Endothelial cell of umbilical vein (primary cell): ENCODE measurements at regions of chr5 and their contacts with region 1.

Region 1: DNA sequence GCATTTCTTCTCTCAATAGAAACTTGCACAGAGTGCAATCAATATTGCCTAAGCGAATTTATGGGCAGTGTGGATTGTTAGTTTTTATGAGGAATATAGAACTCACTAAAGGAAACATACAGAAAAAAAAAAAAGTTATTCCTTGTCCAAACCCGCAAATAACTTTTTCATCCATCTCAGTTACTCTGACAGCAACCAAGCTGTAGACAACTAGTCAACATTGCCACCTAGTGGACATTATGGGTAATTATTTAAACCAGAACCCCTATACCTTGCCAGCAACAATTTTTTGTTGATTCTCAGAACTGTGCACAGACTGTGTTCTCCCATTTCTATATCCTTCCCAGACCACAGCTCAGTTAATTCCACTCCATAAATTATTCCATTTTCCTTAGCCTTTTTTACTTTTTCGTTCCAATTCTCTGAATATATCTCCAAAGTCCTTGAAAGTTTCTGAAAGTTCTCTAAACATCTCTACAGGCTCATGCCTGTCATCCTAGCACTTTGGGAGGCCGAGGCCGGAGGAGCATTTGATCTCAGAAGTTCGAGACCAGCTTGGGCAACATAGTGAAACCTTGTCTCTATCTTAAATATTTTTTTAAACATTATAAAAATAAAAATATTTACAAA is 2.6 kb upstream of the AFAP1L1 start:
- DNase-seq: peak; percentile 47
- H3K4me3 ChIP-seq: no peak overlapping the region
- H3K27ac ChIP-seq: no peak overlapping the region
- H3K4me1 ChIP-seq: peaks cover 14% of the 10 kb centered on the region
- H3K27me3 ChIP-seq: peaks cover 0 to 1% of the 10 kb centered on the region in 2 experiments
- CTCF ChIP-seq: peak; percentile 49 to 57
- POLR2A ChIP-seq: no peak

Region 2: DNA sequence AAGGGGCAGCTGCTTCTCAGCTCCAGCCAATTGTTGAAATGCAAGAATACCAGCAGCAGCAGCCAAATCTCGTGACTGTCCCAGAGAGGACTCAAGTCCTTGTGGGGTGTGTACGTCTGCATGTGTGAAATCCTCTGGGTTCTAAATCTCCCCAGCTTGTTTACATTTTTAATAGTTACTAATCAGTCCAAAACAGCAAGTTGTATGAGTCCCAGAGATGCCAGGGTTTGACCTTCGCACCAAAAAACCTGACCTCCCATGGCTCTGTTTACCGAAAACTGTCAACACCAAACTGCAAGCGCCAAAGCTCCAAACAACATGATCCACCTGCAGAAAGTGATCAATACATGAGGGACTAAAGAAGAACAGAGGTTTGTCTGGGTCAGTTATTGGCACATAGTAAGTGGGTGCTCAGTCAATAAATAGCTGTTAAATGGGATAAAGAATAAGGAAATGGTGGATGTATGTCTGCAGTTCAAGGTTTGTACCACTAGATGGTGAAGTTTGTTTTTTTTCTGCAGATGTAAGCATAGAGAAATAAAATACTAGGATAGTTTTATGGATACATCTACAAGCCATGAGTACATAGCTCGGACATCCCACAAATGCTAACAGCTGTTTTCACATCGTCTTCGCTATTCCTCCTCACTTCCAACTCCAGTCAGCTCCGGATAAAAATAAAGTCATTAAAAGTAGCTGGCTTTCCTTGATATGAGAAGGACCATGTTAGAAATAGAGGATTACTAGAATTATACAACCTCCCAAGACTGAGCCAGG is 527.9 kb before region 1 on chr5:
- CTCF ChIA-PET with region 1: interaction called, 10 read pairs
- POLR2A ChIA-PET with region 1: no interaction called
- dilution Hi-C with region 1: no loop called
- intact Hi-C with region 1: no loop called
- DNase-seq: peak; percentile 82
- H3K4me3 ChIP-seq: no peak overlapping the region
- H3K27ac ChIP-seq: no peak overlapping the region
- H3K4me1 ChIP-seq: no peaks in the 10 kb centered on the region
- H3K27me3 ChIP-seq: no peaks in the 10 kb centered on the region
- CTCF ChIP-seq: peak; percentile 49
- POLR2A ChIP-seq: no peak

Region 3: DNA sequence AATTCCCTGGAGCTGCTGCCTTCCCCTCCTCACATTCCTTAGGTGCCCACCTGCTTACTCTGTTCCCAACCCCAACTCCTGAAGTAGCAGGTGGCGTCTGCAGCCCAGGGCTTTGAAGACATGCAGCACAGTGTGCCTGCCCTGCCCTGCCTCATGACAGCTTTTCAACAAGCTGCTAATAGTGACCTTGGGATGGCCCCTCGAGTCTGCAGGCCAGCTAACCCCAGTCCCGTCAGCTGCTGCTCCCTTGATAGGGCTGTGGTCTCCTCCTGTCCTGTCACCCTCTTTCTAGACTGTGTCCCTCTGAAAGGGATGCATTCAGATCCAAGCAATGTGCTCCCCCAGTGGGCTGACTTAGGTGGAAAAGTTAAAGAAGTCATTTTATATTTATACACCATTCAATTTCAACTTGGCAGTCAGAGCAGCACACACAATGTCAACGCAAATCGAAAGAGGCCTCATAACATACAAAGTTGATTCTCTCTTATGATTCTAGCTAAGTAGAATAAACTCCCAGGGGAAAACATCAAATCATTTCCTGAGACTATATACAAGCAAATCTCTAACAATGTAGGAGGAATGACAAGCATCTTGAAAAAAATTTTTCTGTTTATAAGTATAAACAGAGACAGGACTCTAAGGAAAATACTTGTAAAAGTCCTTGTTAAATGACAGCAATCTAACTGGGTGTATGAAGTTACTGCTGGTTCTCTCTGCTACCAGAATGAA is 404.8 kb before region 1 on chr5:
- CTCF ChIA-PET with region 1: no interaction called
- POLR2A ChIA-PET with region 1: no interaction called
- dilution Hi-C with region 1: no loop called
- intact Hi-C with region 1: no loop called
- DNase-seq: peak; percentile 21
- H3K4me3 ChIP-seq: no peak overlapping the region
- H3K27ac ChIP-seq: no peak overlapping the region
- H3K4me1 ChIP-seq: no peaks in the 10 kb centered on the region
- H3K27me3 ChIP-seq: no peaks in the 10 kb centered on the region
- CTCF ChIP-seq: no peak
- POLR2A ChIP-seq: no peak

Region 4: GRCh38 chr5:149141224-149141956 is 127.7 kb before region 1 on chr5 and contains the start of gene ABLIM3:
- CTCF ChIA-PET with region 1: interaction called, 9 read pairs
- POLR2A ChIA-PET with region 1: no interaction called
- dilution Hi-C with region 1: no loop called
- intact Hi-C with region 1: loop called (anchors 1 kb)
- DNase-seq: peak; percentile 76
- H3K4me3 ChIP-seq: peak within 1 kb of the TSS; percentile 61 to 82 (median 66)
- H3K27ac ChIP-seq: peak within 1 kb of the TSS; percentile 65
- H3K4me1 ChIP-seq: peaks cover 33% of the 10 kb centered on the region
- H3K27me3 ChIP-seq: no peaks in the 10 kb centered on the region
- CTCF ChIP-seq: peak; percentile 89 to 97
- POLR2A ChIP-seq: no peak
- total RNA-seq, gene ABLIM3: 25.7 and 42.1 TPM in 2 replicates

Region 5: GRCh38 chr5:149280124-149280523 is 11.1 kb after region 1 on chr5:
- CTCF ChIA-PET with region 1: interaction called, 11 read pairs
- POLR2A ChIA-PET with region 1: no interaction called
- dilution Hi-C with region 1: no loop called
- intact Hi-C with region 1: no loop called
- DNase-seq: peak; percentile 10
- H3K4me3 ChIP-seq: no peak overlapping the region
- H3K27ac ChIP-seq: no peak overlapping the region
- H3K4me1 ChIP-seq: peaks cover 4% of the 10 kb centered on the region
- H3K27me3 ChIP-seq: no peaks in the 10 kb centered on the region
- CTCF ChIP-seq: no peak
- POLR2A ChIP-seq: no peak

Region 6: DNA sequence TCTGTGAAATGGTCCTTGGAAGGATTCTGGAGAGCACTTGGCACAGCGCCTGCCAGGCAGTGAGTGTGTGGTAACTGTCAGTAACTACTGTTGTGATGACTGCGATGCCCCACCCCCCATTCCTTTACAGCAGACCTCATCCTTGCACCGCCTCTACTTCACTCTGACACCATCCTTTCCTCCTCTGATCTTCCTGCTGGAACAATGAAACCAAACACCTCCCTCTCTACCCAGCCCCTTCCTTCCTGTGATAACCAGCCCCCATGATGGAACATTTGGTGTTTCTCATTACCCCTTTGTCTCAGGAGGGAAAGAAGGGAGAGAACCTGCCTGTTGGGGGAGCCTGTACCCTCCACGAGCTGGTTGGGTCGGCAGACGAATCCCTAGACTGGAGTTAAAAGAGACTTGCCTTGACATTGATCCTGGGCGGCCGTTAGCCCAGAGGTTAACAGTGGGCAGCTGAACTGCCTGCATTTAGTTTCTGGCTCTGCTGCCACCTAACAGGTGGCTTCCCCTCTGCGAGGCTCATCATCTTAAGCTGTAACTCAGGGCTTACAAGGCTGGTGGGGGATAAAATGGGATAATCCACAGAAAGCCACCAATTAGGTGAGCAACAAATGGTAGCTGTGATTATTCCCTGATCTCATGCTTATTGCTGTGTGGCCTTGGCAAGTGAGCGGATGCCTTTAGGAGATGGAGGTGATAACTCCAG is 42.1 kb after region 1 on chr5:
- CTCF ChIA-PET with region 1: interaction called, 12 read pairs
- POLR2A ChIA-PET with region 1: interaction called, 3 read pairs
- dilution Hi-C with region 1: no loop called
- intact Hi-C with region 1: loop called (anchors 1 kb)
- DNase-seq: peak; percentile 78
- H3K4me3 ChIP-seq: no peak overlapping the region
- H3K27ac ChIP-seq: peak overlapping the region; percentile 77
- H3K4me1 ChIP-seq: peaks cover 23% of the 10 kb centered on the region
- H3K27me3 ChIP-seq: no peaks in the 10 kb centered on the region
- CTCF ChIP-seq: no peak
- POLR2A ChIP-seq: no peak

Region 7: DNA sequence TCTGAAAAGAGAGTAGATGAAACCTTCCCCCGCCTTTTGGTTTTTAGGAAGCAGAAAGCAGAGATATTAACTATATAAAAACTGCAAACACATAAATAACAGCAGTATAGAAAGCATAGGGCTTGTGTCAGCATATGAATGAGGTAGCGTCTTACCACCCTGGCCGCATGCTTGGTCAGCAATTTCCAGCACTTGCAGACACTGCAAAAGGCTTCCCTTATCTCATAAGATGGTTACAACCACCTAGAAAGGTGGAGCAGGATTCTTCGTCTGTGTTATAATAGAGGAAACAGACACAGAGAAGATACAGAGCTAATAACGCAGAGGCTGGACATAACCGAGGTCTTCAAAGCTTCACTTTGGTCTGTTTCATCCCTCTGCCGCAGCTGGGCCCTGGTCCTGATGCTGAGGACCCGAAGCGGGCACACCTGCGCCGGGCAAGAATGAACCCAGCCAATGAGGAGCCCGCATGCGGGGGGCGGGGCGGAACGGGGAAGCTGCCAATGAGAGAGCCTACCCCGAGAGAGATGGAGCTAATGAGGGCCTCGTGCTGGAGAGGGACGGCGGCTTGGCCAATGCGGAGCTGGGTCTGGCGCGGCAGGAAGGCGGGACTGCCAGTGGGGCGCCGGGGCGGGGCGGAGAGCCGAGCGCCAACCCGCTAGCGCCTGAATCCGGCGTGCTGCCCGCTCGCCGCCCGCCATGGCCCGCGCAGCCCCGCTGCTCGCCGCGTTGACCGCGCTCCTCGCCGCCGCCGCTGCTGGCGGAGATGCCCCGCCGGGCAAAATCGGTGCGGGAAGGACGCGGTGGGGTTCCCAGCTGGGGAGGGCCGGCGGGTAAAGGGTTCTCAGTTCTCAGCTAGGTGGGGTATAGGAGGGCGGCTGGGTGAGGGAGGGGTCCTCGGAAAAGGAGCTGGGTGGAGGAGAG is 88.6 kb after region 1 on chr5 and contains the start of gene PCYOX1L:
- CTCF ChIA-PET with region 1: interaction called, 13 read pairs
- POLR2A ChIA-PET with region 1: interaction called, 3 read pairs
- dilution Hi-C with region 1: no loop called
- intact Hi-C with region 1: no loop called
- DNase-seq: peak; percentile 95
- H3K4me3 ChIP-seq: peak within 1 kb of the TSS; percentile 25 to 61 (median 48)
- H3K27ac ChIP-seq: no peak within 1 kb of the TSS
- H3K4me1 ChIP-seq: peaks cover 3% of the 10 kb centered on the region
- H3K27me3 ChIP-seq: no peaks in the 10 kb centered on the region
- CTCF ChIP-seq: no peak
- POLR2A ChIP-seq: peak; percentile 69
- total RNA-seq, gene PCYOX1L: 17.0 and 23.3 TPM in 2 replicates

Region 8: GRCh38 chr5:149406203-149406978 is 137.3 kb after region 1 on chr5:
- CTCF ChIA-PET with region 1: no interaction called
- POLR2A ChIA-PET with region 1: no interaction called
- dilution Hi-C with region 1: no loop called
- intact Hi-C with region 1: no loop called
- DNase-seq: no peak
- H3K4me3 ChIP-seq: no peak overlapping the region
- H3K27ac ChIP-seq: no peak overlapping the region
- H3K4me1 ChIP-seq: no peaks in the 10 kb centered on the region
- H3K27me3 ChIP-seq: peaks cover 0 to 1% of the 10 kb centered on the region in 2 experiments
- CTCF ChIP-seq: no peak
- POLR2A ChIP-seq: no peak

Region 9: GRCh38 chr5:149442563-149443182 is 173.6 kb after region 1 on chr5:
- CTCF ChIA-PET with region 1: interaction called, 14 read pairs
- POLR2A ChIA-PET with region 1: no interaction called
- dilution Hi-C with region 1: no loop called
- intact Hi-C with region 1: no loop called
- DNase-seq: peak; percentile 83
- H3K4me3 ChIP-seq: no peak overlapping the region
- H3K27ac ChIP-seq: no peak overlapping the region
- H3K4me1 ChIP-seq: peaks cover 27% of the 10 kb centered on the region
- H3K27me3 ChIP-seq: no peaks in the 10 kb centered on the region
- CTCF ChIP-seq: peak; percentile 93 to 94
- POLR2A ChIP-seq: no peak